Posterior vena cava (tissue), 2 donors: ENCODE measurements at regions of chr4 and their contacts with region 1.

Region 1: DNA sequence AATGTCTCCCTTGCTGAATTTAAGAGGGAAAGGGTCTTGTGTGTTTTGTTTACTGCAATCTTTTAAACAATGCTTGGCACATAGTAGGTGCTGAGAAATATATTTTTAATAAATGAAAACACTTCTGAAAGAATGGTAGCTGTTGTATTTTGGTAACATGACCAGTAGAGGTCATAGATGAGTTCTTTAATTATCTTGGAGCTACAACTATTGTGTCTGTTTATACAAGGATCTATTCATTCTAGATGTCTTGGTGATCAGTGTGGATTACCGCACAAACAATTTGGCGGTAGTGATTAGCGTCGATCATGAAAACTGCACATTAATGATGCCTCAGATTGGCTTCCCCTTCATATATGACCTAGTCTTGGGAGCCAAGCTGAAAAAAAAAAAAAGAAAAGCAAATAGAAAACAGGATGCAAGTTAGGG is 21.4 kb upstream of the SCRG1 start:
- DNase-seq: no peak

Region 2: GRCh38 chr4:173025131-173025530 is 395.2 kb before region 1 on chr4:
- intact Hi-C with region 1: loop called in 1 of 2 experiments (anchors 10 kb)
- DNase-seq: no peak

Region 3: DNA sequence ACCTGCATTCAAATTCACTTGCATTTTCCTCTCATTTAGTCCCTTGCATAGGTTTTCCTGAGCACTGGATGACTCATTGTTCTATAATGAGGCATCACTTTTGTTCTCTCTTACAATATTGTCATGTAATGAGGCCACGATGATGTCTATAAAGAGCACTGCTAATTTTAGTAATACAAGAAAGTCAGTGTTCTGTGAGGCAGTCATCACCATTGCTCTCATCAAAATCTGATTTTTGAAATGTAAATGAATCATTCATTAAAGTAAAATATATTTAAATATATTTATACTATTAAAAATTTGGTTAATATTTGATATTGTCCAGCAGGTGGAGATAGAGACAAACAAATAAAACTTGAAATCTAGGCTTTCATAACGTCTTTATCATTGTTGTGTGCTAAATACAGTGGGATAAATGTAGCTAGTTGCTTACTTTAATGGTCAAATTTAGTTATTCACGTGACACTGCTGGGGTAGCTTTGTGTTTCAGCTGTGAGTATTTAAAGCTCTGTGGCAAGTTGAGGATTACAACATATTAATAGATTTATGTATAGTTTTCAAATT is 101.6 kb before region 1 on chr4:
- intact Hi-C with region 1: loop called (anchors 2 to 5 kb)
- DNase-seq: no peak

Region 4: GRCh38 chr4:173494013-173494970 is 74.0 kb after region 1 on chr4:
- intact Hi-C with region 1: loop called (anchors 2 to 5 kb)
- DNase-seq: no peak